ENCODE measurements at regions of chr5 and their contacts with region 1.

Region 1: GRCh38 chr5:30749971-30750370 is 443.5 kb upstream of the CDH6 start:
- DNase-seq: no peak
- ATAC-seq: no peak
- H3K4me3 ChIP-seq: no peak overlapping the region
- H3K27ac ChIP-seq: no peak overlapping the region
- H3K4me1 ChIP-seq: no peaks in the 10 kb centered on the region
- H3K27me3 ChIP-seq: no peaks in the 10 kb centered on the region
- CTCF ChIP-seq: no peak

Region 2: GRCh38 chr5:29642601-29643000 is 1107.4 kb before region 1 on chr5:
- intact Hi-C with region 1: no loop called
- DNase-seq: no peak
- ATAC-seq: no peak
- H3K4me3 ChIP-seq: no peak overlapping the region
- H3K27ac ChIP-seq: no peak overlapping the region
- H3K4me1 ChIP-seq: no peaks in the 10 kb centered on the region
- H3K27me3 ChIP-seq: no peaks in the 10 kb centered on the region
- CTCF ChIP-seq: no peak

Region 3: GRCh38 chr5:29701600-29701999 is 1048.4 kb before region 1 on chr5:
- intact Hi-C with region 1: loop called in 1 of 10 experiments (anchors 5 kb)
- DNase-seq: no peak
- ATAC-seq: no peak
- H3K4me3 ChIP-seq: no peak overlapping the region
- H3K27ac ChIP-seq: no peak overlapping the region
- H3K4me1 ChIP-seq: no peaks in the 10 kb centered on the region
- H3K27me3 ChIP-seq: no peaks in the 10 kb centered on the region
- CTCF ChIP-seq: no peak

Region 4: DNA sequence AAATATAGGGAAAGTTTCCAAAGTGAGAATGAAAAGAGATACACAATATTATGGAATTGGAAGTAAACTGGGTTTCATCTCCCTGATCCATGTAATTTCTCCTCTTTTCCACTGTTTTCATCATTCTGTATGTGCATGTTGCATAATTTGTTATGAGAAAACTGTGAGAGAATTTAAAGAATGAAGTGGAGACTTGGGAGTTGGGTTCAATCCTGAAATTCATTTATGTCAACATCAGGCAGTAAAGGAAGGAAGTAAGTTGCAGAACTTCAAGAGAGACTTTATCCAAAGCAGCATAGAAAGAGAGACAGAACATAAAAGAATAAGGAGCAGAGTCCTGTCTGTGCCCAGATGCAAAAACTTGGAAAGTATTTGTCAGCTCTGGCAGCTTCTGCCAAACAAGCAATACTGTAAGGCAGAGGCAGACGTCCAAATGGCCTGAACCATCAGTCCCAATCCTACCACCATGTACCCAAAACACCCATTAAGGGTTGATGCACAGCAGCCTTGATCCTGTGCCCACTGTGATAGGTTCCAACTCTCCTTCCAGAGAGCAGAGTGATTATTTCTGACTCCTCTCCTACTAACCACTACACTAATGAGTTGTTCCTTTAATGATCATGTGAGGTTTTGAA is 18.2 kb after region 1 on chr5:
- intact Hi-C with region 1: loop called in 1 of 10 experiments (anchors 1 kb)
- DNase-seq: no peak
- ATAC-seq: peak in 1 of 8 donors; percentile 44
- H3K4me3 ChIP-seq: no peak overlapping the region
- H3K27ac ChIP-seq: no peak overlapping the region
- H3K4me1 ChIP-seq: no peaks in the 10 kb centered on the region
- H3K27me3 ChIP-seq: no peaks in the 10 kb centered on the region
- CTCF ChIP-seq: no peak